CD8-positive, alpha-beta memory T cell (primary cell): ENCODE measurements at regions of chr19 and their contacts with region 1.

Region 1: GRCh38 chr19:4791170-4792018 is at the start of gene FEM1A:
- DNase-seq: peak; percentile 98 to 100 (median 99)
- H3K4me3 ChIP-seq: peak within 1 kb of the TSS; percentile 72
- H3K4me3 Mint-ChIP-seq: peak within 1 kb of the TSS; percentile 81 to 96 (median 84)
- H3K27ac ChIP-seq: peak within 1 kb of the TSS; percentile 84
- H3K27ac Mint-ChIP-seq: peak within 1 kb of the TSS; percentile 81 to 92 (median 88)
- H3K4me1 ChIP-seq: peaks cover 26% of the 10 kb centered on the region
- H3K4me1 Mint-ChIP-seq: peaks cover 24 to 39% (median 36%) of the 10 kb centered on the region in 3 donors
- H3K27me3 ChIP-seq: no peaks in the 10 kb centered on the region
- H3K27me3 Mint-ChIP-seq: no peaks in the 10 kb centered on the region
- total RNA-seq, gene FEM1A: 25.5 to 26.0 TPM

Region 2: GRCh38 chr19:4723367-4724187 is 67.8 kb before region 1 on chr19 and contains the start of gene DPP9:
- CTCF ChIA-PET with region 1: interaction called, 42 read pairs
- POLR2A ChIA-PET with region 1: interaction called, 24 read pairs
- DNase-seq: peak; percentile 93 to 99 (median 98)
- H3K4me3 ChIP-seq: peak within 1 kb of the TSS; percentile 98
- H3K4me3 Mint-ChIP-seq: peak within 1 kb of the TSS; percentile 83 to 94 (median 90)
- H3K27ac ChIP-seq: peak within 1 kb of the TSS; percentile 82
- H3K27ac Mint-ChIP-seq: peak within 1 kb of the TSS; percentile 92 to 99 (median 97)
- H3K4me1 ChIP-seq: peaks cover 29% of the 10 kb centered on the region
- H3K4me1 Mint-ChIP-seq: peaks cover 28 to 47% (median 31%) of the 10 kb centered on the region in 3 donors
- H3K27me3 ChIP-seq: no peaks in the 10 kb centered on the region
- H3K27me3 Mint-ChIP-seq: peaks cover 4 to 11% of the 10 kb centered on the region in 2 donors
- total RNA-seq, gene DPP9: 105 TPM

Region 3: GRCh38 chr19:4732680-4733114 is 58.7 kb before region 1 on chr19:
- CTCF ChIA-PET with region 1: interaction called, 57 read pairs
- POLR2A ChIA-PET with region 1: interaction called, 5 read pairs
- DNase-seq: peak; percentile 26 to 72 (median 54)
- H3K4me3 ChIP-seq: peak overlapping the region; percentile 23
- H3K4me3 Mint-ChIP-seq: peak overlapping the region in 6 of 7 donors; percentile 4 to 54 (median 32)
- H3K27ac ChIP-seq: no peak overlapping the region
- H3K27ac Mint-ChIP-seq: peak overlapping the region in 5 of 8 donors; percentile 5 to 95 (median 24)
- H3K4me1 ChIP-seq: peaks cover 4% of the 10 kb centered on the region
- H3K4me1 Mint-ChIP-seq: peaks cover 4 to 7% (median 5%) of the 10 kb centered on the region in 3 donors
- H3K27me3 ChIP-seq: peaks cover 3% of the 10 kb centered on the region
- H3K27me3 Mint-ChIP-seq: peaks cover 6 to 10% of the 10 kb centered on the region in 2 donors

Region 4: GRCh38 chr19:4803736-4804695 is 12.6 kb after region 1 on chr19:
- CTCF ChIA-PET with region 1: interaction called, 26 read pairs
- POLR2A ChIA-PET with region 1: no interaction called
- DNase-seq: peak; percentile 40 to 72 (median 53)
- H3K4me3 ChIP-seq: no peak overlapping the region
- H3K4me3 Mint-ChIP-seq: no peak overlapping the region
- H3K27ac ChIP-seq: no peak overlapping the region
- H3K27ac Mint-ChIP-seq: peak overlapping the region in 1 of 8 donors; percentile 21
- H3K4me1 ChIP-seq: no peaks in the 10 kb centered on the region
- H3K4me1 Mint-ChIP-seq: peaks cover 0 to 3% (median 0%) of the 10 kb centered on the region in 3 donors
- H3K27me3 ChIP-seq: no peaks in the 10 kb centered on the region
- H3K27me3 Mint-ChIP-seq: no peaks in the 10 kb centered on the region

Region 5: DNA sequence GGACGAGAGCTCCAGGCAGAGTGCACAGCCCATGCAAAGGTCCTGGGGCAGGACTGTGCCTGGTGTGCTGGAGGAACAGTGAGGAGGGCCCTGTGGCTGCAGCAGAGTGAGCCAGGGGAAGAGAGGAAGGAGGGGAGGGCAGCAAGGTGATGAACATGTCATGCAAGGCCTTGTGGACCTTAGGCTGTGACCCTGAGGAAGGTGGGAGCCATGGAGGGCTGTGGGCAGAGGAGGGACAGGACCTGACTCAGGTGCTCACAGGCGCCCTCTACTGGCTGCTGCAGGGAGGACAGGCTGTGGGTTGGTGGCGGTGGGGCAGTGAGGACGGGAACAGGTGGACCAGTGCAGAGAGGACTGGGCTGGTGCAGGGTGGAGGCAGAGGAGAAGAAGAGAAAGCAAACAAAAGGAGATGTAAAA is 378.9 kb after region 1 on chr19:
- CTCF ChIA-PET with region 1: no interaction called
- POLR2A ChIA-PET with region 1: no interaction called
- DNase-seq: peak in 4 of 5 donors; percentile 17 to 38 (median 36)
- H3K4me3 ChIP-seq: no peak overlapping the region
- H3K4me3 Mint-ChIP-seq: no peak overlapping the region
- H3K27ac ChIP-seq: no peak overlapping the region
- H3K27ac Mint-ChIP-seq: peak overlapping the region in 1 of 8 donors; percentile 94
- H3K4me1 ChIP-seq: no peaks in the 10 kb centered on the region
- H3K4me1 Mint-ChIP-seq: peaks cover 0 to 2% (median 0%) of the 10 kb centered on the region in 3 donors
- H3K27me3 ChIP-seq: no peaks in the 10 kb centered on the region
- H3K27me3 Mint-ChIP-seq: peaks cover 0 to 10% of the 10 kb centered on the region in 2 donors